Common myeloid progenitor, CD34-positive (primary cell): ENCODE measurements at regions of chr9 and their contacts with region 1.

Region 1: DNA sequence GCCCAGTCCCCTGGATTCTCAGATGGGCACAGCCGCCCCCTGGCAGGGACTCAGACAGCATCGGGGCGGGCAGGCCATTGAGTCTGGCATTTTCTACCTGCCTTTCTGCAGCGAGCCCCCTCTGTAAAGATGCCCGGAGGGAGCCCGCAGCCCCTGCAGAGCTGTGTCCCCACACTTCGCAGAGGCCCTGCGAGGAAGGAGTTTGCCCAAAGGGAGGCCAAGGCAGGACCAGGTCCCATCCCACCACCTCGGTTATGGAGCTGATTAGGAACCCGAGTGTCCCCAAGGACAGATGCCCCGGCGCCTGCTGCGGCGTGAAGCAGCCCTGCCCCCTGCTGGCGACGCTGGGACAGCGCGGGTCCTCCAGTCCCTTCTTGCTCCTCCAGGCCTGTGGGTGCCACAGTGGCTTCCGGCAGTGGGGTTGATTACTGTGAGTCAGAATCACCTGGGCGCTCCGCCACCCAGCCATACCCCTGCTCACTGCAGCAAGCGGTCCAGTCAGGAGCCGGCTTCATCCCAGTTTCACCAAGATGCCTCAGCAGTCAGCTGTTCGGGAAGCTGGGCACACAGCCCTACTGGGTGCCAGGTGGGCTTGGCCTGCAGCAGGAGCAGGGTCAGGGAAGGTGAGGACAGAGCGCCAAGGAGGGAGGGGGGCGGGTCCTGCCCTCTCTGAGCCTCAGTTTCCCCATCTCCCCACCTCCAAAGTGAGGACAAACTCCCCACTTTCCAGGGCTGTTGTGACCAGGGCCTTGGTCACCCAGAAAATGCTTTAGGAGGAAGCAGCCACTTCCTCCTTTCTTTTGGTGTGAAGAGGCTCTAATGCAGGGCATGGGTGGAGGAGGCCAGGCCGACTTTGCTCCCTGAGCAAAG is 117.1 kb downstream of the RXRA start:
- DNase-seq: peak; percentile 93 to 96 (median 95)
- H3K4me3 ChIP-seq: peak overlapping the region in 2 of 7 experiments; percentile 4 to 8
- H3K27ac ChIP-seq: no peak overlapping the region
- H3K4me1 ChIP-seq: peaks cover 2 to 49% (median 43%) of the 10 kb centered on the region in 4 experiments
- H3K27me3 ChIP-seq: peaks cover 0 to 19% (median 5%) of the 10 kb centered on the region in 5 experiments

Region 2: GRCh38 chr9:134163353-134164196 is 279.8 kb before region 1 on chr9:
- CTCF ChIA-PET with region 1: interaction called, 21 read pairs
- POLR2A ChIA-PET with region 1: no interaction called
- DNase-seq: peak; percentile 67 to 81 (median 72)
- H3K4me3 ChIP-seq: peak overlapping the region in 1 of 7 experiments; percentile 64
- H3K27ac ChIP-seq: no peak overlapping the region
- H3K4me1 ChIP-seq: peaks cover 0 to 15% (median 11%) of the 10 kb centered on the region in 4 experiments
- H3K27me3 ChIP-seq: no peaks in the 10 kb centered on the region

Region 3: GRCh38 chr9:134171316-134172197 is 271.8 kb before region 1 on chr9:
- CTCF ChIA-PET with region 1: interaction called, 22 read pairs
- POLR2A ChIA-PET with region 1: no interaction called
- DNase-seq: no peak
- H3K4me3 ChIP-seq: no peak overlapping the region
- H3K27ac ChIP-seq: no peak overlapping the region
- H3K4me1 ChIP-seq: peaks cover 3 to 46% (median 37%) of the 10 kb centered on the region in 4 experiments
- H3K27me3 ChIP-seq: no peaks in the 10 kb centered on the region

Region 4: DNA sequence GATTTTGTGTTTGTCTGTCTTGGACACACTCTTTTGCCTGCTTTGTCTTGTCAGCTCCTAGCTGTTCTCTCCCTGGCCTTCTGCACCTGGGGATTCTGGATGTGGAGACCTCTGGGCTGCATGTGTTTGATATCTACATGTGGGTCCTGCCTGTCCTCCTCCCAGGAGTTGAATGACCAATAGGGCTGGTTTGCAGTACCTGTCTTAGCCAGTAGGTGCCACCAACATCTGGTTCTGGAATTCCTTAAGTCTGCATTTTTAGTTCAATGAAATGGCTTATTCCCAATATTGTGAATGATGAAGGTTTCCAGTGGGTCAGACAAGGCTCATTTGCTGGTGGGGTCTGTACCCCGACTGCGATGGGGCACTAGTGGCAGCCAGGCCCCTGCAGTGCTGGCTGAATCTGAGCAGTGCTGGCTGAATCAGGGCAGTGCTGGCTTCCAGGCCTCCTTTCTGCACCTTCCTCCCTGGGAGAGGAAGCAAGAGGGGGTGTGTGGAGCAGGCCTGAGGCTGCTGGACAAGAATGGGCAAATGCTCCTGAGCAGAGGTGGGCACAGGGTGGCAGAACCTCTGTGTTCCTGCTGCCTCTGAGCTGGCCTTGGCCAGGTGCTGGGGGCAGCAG is 43.9 kb before region 1 on chr9:
- CTCF ChIA-PET with region 1: interaction called, 13 read pairs
- POLR2A ChIA-PET with region 1: interaction called, 3 read pairs
- DNase-seq: peak in 1 of 3 donors; percentile 19
- H3K4me3 ChIP-seq: no peak overlapping the region
- H3K27ac ChIP-seq: no peak overlapping the region
- H3K4me1 ChIP-seq: peaks cover 3 to 94% (median 67%) of the 10 kb centered on the region in 4 experiments
- H3K27me3 ChIP-seq: no peaks in the 10 kb centered on the region